ENCODE measurements at regions of chr11 and their contacts with region 1.

Region 1: GRCh38 chr11:14643697-14644225 is at the start of gene PDE3B:
- DNase-seq: peak; percentile 85
- H3K4me3 Mint-ChIP-seq: peak within 1 kb of the TSS; percentile 92
- H3K27ac Mint-ChIP-seq: peak within 1 kb of the TSS; percentile 87
- H3K4me1 Mint-ChIP-seq: peaks cover 47% of the 10 kb centered on the region
- H3K27me3 Mint-ChIP-seq: no peaks in the 10 kb centered on the region
- total RNA-seq, gene PDE3B: 73.9 to 74.9 TPM

Region 2: GRCh38 chr11:14499554-14500180 is 144.1 kb before region 1 on chr11 and contains the start of gene COPB1:
- CTCF ChIA-PET with region 1: interaction called, 4 read pairs
- POLR2A ChIA-PET with region 1: interaction called, 31 read pairs
- DNase-seq: peak; percentile 96
- H3K4me3 Mint-ChIP-seq: peak within 1 kb of the TSS; percentile 98
- H3K27ac Mint-ChIP-seq: peak within 1 kb of the TSS; percentile 91
- H3K4me1 Mint-ChIP-seq: peaks cover 45% of the 10 kb centered on the region
- H3K27me3 Mint-ChIP-seq: no peaks in the 10 kb centered on the region
- total RNA-seq, gene COPB1: 98.0 to 100.0 TPM

Region 3: DNA sequence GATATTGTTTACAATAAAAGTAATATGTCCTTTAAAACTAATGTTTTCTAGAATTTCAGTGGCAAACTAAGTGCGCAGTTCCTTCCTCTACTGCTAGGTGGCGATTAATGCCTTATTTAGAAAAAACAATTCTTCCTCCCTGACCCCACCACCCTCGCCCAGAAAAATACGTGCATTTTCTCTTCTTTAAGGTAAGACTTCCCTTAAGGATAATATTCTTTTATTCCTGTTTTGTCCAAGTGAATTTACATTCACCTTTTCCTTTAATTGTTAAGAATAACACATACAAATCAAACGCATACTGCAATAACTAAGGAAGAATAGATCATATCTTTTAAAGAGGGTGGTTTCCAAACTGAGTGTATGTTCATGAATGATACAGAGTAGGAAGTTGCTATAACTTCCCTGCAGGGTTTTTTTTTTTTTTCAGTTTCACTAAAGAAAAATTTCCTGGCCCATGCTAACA is 106.6 kb before region 1 on chr11:
- CTCF ChIA-PET with region 1: interaction called, 45 read pairs
- POLR2A ChIA-PET with region 1: interaction called, 116 read pairs
- DNase-seq: peak; percentile 48
- H3K4me3 Mint-ChIP-seq: peak overlapping the region; percentile 58
- H3K27ac Mint-ChIP-seq: peak overlapping the region; percentile 47
- H3K4me1 Mint-ChIP-seq: peaks cover 22% of the 10 kb centered on the region
- H3K27me3 Mint-ChIP-seq: no peaks in the 10 kb centered on the region

Region 4: DNA sequence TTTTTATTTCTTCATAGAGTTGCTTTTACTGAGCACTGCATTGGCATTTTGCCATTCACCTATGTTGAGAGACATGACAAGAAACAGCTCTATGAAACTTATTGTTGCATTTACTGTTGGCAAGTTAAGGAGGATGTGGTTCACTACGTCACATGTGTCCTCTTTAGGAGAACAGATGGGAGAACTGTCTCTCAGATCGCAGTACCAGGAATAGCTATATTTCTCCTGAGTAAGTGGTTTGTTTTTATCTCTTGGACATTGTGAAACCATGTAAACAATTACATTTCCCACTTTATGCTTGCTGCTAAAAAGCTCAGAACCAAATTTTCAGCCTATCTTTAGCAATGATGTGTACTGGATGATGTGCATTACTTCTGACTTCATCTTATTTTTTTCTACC is 88.8 kb before region 1 on chr11:
- CTCF ChIA-PET with region 1: interaction called, 8 read pairs
- POLR2A ChIA-PET with region 1: interaction called, 17 read pairs
- DNase-seq: no peak
- H3K4me3 Mint-ChIP-seq: peak overlapping the region; percentile 2
- H3K27ac Mint-ChIP-seq: peak overlapping the region; percentile 85
- H3K4me1 Mint-ChIP-seq: peaks cover 50% of the 10 kb centered on the region
- H3K27me3 Mint-ChIP-seq: no peaks in the 10 kb centered on the region

Region 5: DNA sequence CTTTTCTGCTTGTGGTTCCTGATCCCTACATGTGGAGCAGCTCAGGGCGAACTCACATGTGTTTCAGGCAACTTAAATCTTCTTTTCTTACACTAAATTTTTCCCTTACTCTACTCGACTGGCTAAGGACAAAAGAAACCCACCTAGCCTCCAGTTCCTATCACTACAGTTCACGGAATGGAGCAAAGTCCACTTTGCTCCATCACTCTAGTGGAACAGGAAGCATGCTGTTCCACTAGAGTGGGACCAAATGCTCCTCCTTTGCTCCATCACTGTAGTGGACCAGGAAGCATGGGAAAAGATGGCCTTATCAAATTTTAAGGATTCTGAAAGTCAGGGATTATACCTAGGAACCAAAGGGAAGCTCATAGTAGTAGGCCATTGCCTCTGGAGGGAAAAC is 35.9 kb after region 1 on chr11:
- CTCF ChIA-PET with region 1: no interaction called
- POLR2A ChIA-PET with region 1: no interaction called
- DNase-seq: no peak
- H3K4me3 Mint-ChIP-seq: no peak overlapping the region
- H3K27ac Mint-ChIP-seq: no peak overlapping the region
- H3K4me1 Mint-ChIP-seq: peaks cover 16% of the 10 kb centered on the region
- H3K27me3 Mint-ChIP-seq: no peaks in the 10 kb centered on the region

Region 6: DNA sequence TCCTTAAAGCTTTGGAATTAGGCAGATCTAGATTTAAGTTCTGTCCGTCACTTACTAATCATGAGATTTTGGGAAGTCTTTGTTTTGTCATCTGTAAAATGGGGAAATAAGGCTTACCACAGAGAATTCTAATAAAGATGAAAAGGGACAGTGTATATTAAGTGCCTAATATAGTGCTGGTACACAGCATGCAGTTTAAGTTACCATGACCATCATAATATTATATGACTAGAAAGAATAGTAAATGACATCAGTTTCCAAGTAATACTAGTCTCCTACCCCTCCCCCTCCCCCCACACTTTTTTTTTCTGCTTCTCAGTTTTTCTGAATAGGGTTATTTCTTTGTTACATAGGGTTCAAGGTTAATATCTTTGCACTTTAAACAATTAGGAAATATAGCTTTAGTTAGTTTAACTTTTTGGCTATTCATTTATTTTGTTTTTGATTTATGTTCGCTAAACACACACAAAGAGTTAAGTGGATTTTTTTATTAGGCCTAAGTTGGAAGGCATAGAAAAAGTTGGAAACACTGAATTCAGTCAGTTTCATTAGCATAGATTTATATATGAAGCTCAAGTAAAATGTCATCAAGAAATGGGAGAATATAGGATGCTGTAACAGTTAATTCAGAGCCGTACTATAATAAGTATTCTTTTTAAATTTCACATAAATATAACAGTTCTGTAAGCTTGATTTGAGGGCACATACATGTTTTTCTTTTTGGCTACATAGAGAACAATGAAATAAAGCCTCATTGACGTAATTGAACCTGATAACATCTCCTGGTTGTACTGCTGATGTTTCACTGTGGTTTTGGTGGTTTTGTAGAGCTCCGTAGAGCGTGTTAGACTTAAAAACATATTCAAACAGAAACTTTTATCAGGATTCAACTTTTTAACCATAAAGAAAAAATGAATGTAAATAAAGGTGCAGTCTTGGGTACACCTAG is 121.1 kb after region 1 on chr11:
- CTCF ChIA-PET with region 1: interaction called, 28 read pairs
- POLR2A ChIA-PET with region 1: interaction called, 111 read pairs
- DNase-seq: peak; percentile 47
- H3K4me3 Mint-ChIP-seq: peak overlapping the region; percentile 52
- H3K27ac Mint-ChIP-seq: no peak overlapping the region
- H3K4me1 Mint-ChIP-seq: peaks cover 34% of the 10 kb centered on the region
- H3K27me3 Mint-ChIP-seq: no peaks in the 10 kb centered on the region

Region 7: GRCh38 chr11:14892036-14892567 is 248.3 kb after region 1 on chr11 and contains the start of gene CYP2R1:
- CTCF ChIA-PET with region 1: interaction called, 18 read pairs
- POLR2A ChIA-PET with region 1: interaction called, 48 read pairs
- DNase-seq: peak; percentile 94
- H3K4me3 Mint-ChIP-seq: peak within 1 kb of the TSS; percentile 90
- H3K27ac Mint-ChIP-seq: peak within 1 kb of the TSS; percentile 95
- H3K4me1 Mint-ChIP-seq: peaks cover 57% of the 10 kb centered on the region
- H3K27me3 Mint-ChIP-seq: no peaks in the 10 kb centered on the region
- total RNA-seq, gene CYP2R1: 22.2 TPM

Measured in activated CD4-positive, alpha-beta memory T cell treated with anti-CD3 and anti-CD28 coated beads, Interleukin-2, amount 10 ng/mL, durations not matched to agents 7 days and 5 days (primary cell).